GM18951 (cell line): ENCODE measurements at regions of chr16 and their contacts with region 1.

Region 1: GRCh38 chr16:86529160-86529559 is 18.8 kb downstream of the FOXF1 start:
- POLR2A ChIP-seq: no peak

Region 2: GRCh38 chr16:86074651-86075487 is 454.3 kb before region 1 on chr16:
- in situ Hi-C with region 1: loop called (anchors 5 kb)
- POLR2A ChIP-seq: no peak

Region 3: DNA sequence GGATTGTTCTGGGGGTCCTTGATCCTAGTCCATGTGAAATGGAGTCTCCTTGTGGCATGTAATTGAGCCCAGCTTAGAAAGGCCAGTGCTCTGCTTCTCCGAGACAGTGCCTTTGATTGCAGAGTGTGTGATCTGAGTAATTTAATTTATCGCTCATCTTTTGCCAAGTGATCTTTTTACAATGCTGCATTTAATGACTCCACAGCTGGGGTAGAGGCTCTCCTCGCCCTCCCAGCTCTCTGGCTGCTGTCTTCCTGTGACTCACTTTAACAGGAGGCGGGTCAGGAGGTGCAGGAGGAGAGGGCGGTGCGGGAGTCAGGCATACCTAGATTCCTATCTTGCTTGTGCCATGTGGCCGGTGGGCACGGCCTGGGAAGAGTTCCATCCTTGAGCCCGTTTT is 132.3 kb before region 1 on chr16:
- in situ Hi-C with region 1: no loop called
- POLR2A ChIP-seq: no peak

Region 4: DNA sequence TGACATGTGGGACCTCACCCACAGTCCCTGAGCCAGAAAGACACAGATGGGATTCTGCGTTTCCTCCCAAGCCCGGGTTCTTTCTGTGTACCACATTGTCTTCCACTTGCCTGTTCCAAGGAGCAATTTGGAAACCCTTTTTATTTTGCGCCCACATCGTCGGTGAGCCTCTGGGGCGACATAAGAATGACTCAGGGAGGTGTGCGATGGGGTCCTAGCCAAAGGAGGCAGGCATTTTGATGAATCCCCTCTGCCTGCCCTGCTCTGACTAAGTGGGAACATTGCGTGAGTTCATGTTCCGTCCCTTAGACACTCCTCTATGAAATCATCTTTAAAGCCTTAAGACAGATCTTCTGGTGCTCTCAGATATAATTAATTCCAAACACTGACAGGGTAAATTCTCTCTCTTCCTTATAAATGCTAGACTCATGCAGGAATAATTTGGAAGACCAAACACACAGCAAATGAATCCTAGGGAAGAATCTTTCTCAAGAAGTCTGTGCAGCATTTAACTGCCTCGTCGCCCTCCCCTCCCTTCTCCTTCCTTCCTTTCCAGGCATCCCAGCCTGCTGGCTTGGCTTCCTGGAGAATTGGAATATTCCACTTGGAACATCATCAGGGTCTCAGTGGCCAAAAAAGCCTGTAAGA is 71.5 kb before region 1 on chr16:
- in situ Hi-C with region 1: no loop called
- POLR2A ChIP-seq: no peak

Region 5: GRCh38 chr16:86597880-86598606 is 68.9 kb after region 1 on chr16:
- in situ Hi-C with region 1: no loop called
- POLR2A ChIP-seq: no peak

Region 6: DNA sequence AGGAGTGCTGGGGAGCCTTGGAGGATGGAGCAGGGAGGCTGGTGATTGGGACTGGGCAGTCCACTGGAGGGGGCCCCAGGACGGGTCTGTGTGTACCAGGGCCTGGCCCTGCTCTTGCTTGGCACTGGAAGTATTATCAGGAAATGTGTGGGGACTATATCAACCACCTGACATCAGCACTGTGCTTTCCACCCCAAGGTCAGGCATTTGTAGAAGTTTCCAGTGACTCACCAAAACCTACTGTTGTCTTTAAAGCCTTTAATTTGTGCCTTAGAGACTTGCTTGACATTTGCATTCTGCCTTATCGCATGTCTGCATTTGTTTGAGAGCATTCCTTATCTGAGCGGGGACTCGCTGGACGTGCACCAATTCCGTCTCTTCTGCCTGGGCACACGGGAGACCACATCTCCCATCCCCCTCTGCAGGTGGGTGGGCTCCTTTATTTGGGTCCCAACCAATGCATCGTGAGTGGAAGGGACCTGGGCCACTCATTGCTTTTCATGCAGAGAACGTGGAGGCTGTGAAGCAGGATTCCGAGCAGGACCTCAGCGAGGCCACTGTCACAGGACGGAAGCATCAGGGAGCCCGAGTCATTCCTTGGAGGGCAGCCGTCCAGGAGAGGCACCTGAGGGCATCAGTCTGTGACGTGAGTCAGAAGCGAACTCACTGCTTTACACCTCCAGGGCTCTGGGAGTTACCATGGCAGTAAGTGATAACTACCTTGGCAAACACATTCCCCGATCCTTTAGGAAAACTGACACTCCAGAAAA is 372.5 kb after region 1 on chr16:
- in situ Hi-C with region 1: no loop called
- POLR2A ChIP-seq: no peak